ENCODE measurements at regions of chr16 and their contacts with region 1.

Region 1: GRCh38 chr16:65117811-65118448 is 3.9 kb downstream of the CDH11 start:
- DNase-seq: peak; percentile 59
- ATAC-seq: peak; percentile 91
- H3K4me3 ChIP-seq: no peak overlapping the region
- H3K27ac ChIP-seq: no peak overlapping the region
- H3K4me1 ChIP-seq: no peaks in the 10 kb centered on the region
- H3K27me3 ChIP-seq: peaks cover 1 to 21% of the 10 kb centered on the region in 2 experiments; a peak in 3 of 5 replicates
- CTCF ChIP-seq: peak; percentile 90
- EP300 ChIP-seq: no peak
- POLR2A ChIP-seq: no peak
- RAD21 ChIP-seq: peak; percentile 85

Region 2: DNA sequence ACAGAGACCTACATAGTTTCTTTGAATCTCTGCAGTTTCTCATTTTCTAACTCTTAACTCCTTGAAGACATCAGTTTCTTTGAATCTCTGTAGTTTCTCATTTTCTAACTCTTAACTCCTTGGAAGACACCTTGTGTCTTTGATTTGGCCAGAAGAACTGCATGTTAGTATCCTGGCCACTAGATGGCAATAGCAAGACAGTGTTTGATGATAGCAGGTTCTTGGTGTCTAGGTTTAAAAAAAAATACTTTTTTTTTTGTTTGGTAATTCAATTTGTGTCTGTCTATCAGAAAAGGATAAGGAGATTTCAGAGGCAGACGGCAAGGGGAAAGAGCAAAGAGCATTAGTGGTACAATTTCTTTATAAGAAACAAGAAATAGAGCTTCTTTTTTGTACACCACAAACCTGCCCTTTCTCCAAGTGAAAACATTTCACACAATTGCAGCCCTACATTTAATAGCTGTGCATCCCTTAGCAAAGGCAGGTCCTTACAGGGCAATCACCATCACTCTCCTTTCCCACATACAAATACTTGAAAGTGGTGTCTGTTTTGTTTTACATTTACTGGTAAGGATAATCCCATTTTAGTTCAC is 1756.8 kb before region 1 on chr16:
- CTCF ChIA-PET with region 1: interaction called, 14 read pairs
- POLR2A ChIA-PET with region 1: no interaction called
- in situ Hi-C with region 1: loop called (anchors 25 kb)
- intact Hi-C with region 1: no loop called
- DNase-seq: peak; percentile 46
- ATAC-seq: peak; percentile 62
- H3K4me3 ChIP-seq: no peak overlapping the region
- H3K27ac ChIP-seq: no peak overlapping the region
- H3K4me1 ChIP-seq: no peaks in the 10 kb centered on the region
- H3K27me3 ChIP-seq: no peaks in the 10 kb centered on the region
- CTCF ChIP-seq: peak; percentile 76
- EP300 ChIP-seq: no peak
- POLR2A ChIP-seq: no peak
- RAD21 ChIP-seq: 0 out of 2 replicates have a peak, but pooled peaks have one; percentile 15

Region 3: GRCh38 chr16:63461248-63461841 is 1656.6 kb before region 1 on chr16:
- CTCF ChIA-PET with region 1: interaction called, 5 read pairs
- POLR2A ChIA-PET with region 1: no interaction called
- in situ Hi-C with region 1: loop called (anchors 25 kb)
- intact Hi-C with region 1: loop called (anchors 2 kb)
- DNase-seq: peak; percentile 25
- ATAC-seq: peak; percentile 43; the same call in 2 of the 3 replicates
- H3K4me3 ChIP-seq: no peak overlapping the region
- H3K27ac ChIP-seq: no peak overlapping the region
- H3K4me1 ChIP-seq: no peaks in the 10 kb centered on the region
- H3K27me3 ChIP-seq: no peaks in the 10 kb centered on the region
- CTCF ChIP-seq: peak; percentile 55
- EP300 ChIP-seq: no peak
- POLR2A ChIP-seq: no peak
- RAD21 ChIP-seq: no peak

Region 4: GRCh38 chr16:64089697-64090096 is 1028.2 kb before region 1 on chr16:
- CTCF ChIA-PET with region 1: interaction called, 6 read pairs
- POLR2A ChIA-PET with region 1: no interaction called
- in situ Hi-C with region 1: loop called (anchors 10 kb)
- intact Hi-C with region 1: loop called (anchors 1 kb)
- DNase-seq: peak; percentile 50
- ATAC-seq: peak; percentile 86
- H3K4me3 ChIP-seq: no peak overlapping the region
- H3K27ac ChIP-seq: no peak overlapping the region
- H3K4me1 ChIP-seq: no peaks in the 10 kb centered on the region
- H3K27me3 ChIP-seq: no peaks in the 10 kb centered on the region
- CTCF ChIP-seq: peak; percentile 77
- EP300 ChIP-seq: no peak
- POLR2A ChIP-seq: no peak
- RAD21 ChIP-seq: peak; percentile 70

Region 5: GRCh38 chr16:64478252-64478906 is 639.6 kb before region 1 on chr16:
- CTCF ChIA-PET with region 1: no interaction called
- POLR2A ChIA-PET with region 1: no interaction called
- in situ Hi-C with region 1: no loop called
- intact Hi-C with region 1: loop called (anchors 10 kb)
- DNase-seq: peak; percentile 64
- ATAC-seq: peak; percentile 94
- H3K4me3 ChIP-seq: no peak overlapping the region
- H3K27ac ChIP-seq: no peak overlapping the region
- H3K4me1 ChIP-seq: peaks cover 16% of the 10 kb centered on the region
- H3K27me3 ChIP-seq: no peaks in the 10 kb centered on the region
- CTCF ChIP-seq: no peak
- EP300 ChIP-seq: no peak
- POLR2A ChIP-seq: no peak
- RAD21 ChIP-seq: no peak

Region 6: GRCh38 chr16:66026211-66026610 is 908.3 kb after region 1 on chr16:
- CTCF ChIA-PET with region 1: no interaction called
- POLR2A ChIA-PET with region 1: no interaction called
- in situ Hi-C with region 1: no loop called
- intact Hi-C with region 1: loop called (anchors 5 kb)
- DNase-seq: no peak
- ATAC-seq: peak; percentile 83
- H3K4me3 ChIP-seq: no peak overlapping the region
- H3K27ac ChIP-seq: no peak overlapping the region
- H3K4me1 ChIP-seq: no peaks in the 10 kb centered on the region
- H3K27me3 ChIP-seq: no peaks in the 10 kb centered on the region
- CTCF ChIP-seq: peak; percentile 50
- EP300 ChIP-seq: no peak
- POLR2A ChIP-seq: no peak
- RAD21 ChIP-seq: no peak